Activated T-helper 2 cell treated with anti-CD3 and anti-CD28 coated beads, Interferon-gamma antibody, Interleukin-2, Interleukin-4, amounts not matched to agents 10 μg/mL and 5 μg/mL and 100 μg/mL, durations not matched to agents 14 hours and 24 hours and 36 hours (primary cell): ENCODE measurements at regions of chr12 and their contacts with region 1.

Region 1: DNA sequence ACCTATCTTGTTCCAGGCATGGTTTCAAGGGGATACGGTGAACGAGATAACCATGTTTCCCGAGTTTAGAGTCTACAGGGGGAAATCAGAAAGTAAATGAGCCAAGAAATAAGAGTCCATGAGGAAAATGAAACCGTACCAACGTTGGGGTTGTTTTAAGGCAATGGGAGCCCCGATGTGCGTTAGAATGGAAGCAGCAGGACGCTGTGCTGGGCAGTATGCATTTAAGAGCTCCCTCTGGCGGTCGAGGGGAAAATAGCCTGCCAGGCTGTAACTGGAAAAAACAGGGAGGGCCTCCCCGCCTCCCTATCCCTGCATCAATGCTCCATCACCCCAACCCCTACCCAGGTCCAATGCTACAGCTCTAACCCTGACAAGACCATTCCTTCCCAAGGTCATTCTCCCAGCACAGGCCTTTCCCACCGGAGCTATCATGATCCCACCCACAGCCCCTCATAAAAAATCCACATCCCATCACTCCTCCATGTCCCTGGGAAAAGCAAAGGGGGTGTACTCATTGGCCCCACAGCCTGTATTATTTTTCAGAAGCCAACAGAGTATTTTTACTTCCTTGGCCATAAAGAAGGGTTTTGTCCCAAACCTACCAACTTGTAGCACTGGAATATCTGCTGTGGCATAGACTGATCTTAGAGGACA is 226.3 kb upstream of the NOS1 start:
- DNase-seq: peak; percentile 16
- H3K4me3 Mint-ChIP-seq: no peak overlapping the region
- H3K27ac Mint-ChIP-seq: no peak overlapping the region
- H3K4me1 Mint-ChIP-seq: no peaks in the 10 kb centered on the region
- H3K27me3 Mint-ChIP-seq: peaks cover 1% of the 10 kb centered on the region

Region 2: GRCh38 chr12:117212563-117213190 is 375.1 kb before region 1 on chr12:
- intact Hi-C with region 1: loop called (anchors 2 kb)
- DNase-seq: peak; percentile 30
- H3K4me3 Mint-ChIP-seq: no peak overlapping the region
- H3K27ac Mint-ChIP-seq: no peak overlapping the region
- H3K4me1 Mint-ChIP-seq: no peaks in the 10 kb centered on the region
- H3K27me3 Mint-ChIP-seq: peaks cover 4% of the 10 kb centered on the region

Region 3: GRCh38 chr12:117367011-117367638 is 220.6 kb before region 1 on chr12:
- intact Hi-C with region 1: loop called (anchors 2 kb)
- DNase-seq: peak; percentile 33
- H3K4me3 Mint-ChIP-seq: no peak overlapping the region
- H3K27ac Mint-ChIP-seq: no peak overlapping the region
- H3K4me1 Mint-ChIP-seq: no peaks in the 10 kb centered on the region
- H3K27me3 Mint-ChIP-seq: peaks cover 17% of the 10 kb centered on the region

Region 4: GRCh38 chr12:118264068-118264467 is 676.3 kb after region 1 on chr12:
- intact Hi-C with region 1: loop called (anchors 5 kb)
- DNase-seq: no peak
- H3K4me3 Mint-ChIP-seq: no peak overlapping the region
- H3K27ac Mint-ChIP-seq: no peak overlapping the region
- H3K4me1 Mint-ChIP-seq: peaks cover 3% of the 10 kb centered on the region
- H3K27me3 Mint-ChIP-seq: no peaks in the 10 kb centered on the region